PC-3 (cell line): ENCODE measurements at regions of chr5 and their contacts with region 1.

Region 1: DNA sequence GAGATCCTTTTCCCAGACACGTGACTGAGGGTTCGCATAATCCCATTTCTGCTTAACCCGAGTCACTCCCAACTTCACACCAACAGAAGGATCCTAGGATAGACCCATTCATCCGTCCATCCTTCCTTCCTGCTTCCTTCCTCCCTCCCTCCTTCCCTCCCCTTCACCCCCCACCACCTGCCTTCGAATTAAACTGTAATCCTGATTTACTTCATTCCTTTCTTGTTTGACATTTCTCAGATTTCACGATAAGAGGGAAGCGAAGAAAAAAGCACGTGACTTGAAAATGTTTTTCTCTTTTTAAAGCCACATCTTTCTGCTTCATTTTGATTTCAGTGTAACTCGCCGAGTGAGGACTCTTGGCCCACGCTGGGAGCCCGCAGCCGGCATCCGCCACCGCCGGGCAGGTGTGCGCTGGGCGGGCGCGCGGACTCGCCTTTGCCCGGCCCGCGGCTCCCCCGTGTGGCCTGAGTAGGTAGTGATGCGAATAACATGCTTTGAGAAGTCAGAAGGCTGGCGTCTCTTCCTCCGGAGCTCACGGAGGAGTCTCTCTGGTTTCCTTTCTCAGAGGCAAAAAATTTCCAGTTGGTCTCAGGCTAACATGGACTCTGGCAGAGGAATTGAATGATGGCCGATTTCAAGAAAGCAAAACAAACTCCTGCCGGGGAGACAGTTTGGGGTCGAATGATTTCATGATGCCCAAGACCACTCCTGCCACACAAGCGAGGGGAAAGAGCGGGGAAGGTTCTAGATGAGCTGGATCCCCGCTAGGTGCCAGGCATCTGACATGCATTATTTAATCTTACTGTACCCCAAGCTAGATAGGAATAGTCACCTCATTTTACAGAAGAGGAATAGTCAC is 117.7 kb downstream of the SLC12A2 start:
- DNase-seq: peak; percentile 87
- ATAC-seq: peak; percentile 66
- H3K4me3 ChIP-seq: peak overlapping the region; percentile 57
- H3K27ac ChIP-seq: peak overlapping the region; percentile 4; the same call in 1 of the 2 replicates
- H3K4me1 ChIP-seq: peaks cover 33% of the 10 kb centered on the region
- H3K27me3 ChIP-seq: no peaks in the 10 kb centered on the region
- CTCF ChIP-seq: peak; percentile 96

Region 2: GRCh38 chr5:127746756-127747155 is 454.5 kb before region 1 on chr5:
- CTCF ChIA-PET with region 1: no interaction called
- POLR2A ChIA-PET with region 1: no interaction called
- intact Hi-C with region 1: loop called (anchors 1 kb)
- DNase-seq: peak; percentile 69
- ATAC-seq: peak; percentile 92
- H3K4me3 ChIP-seq: no peak overlapping the region
- H3K27ac ChIP-seq: no peak overlapping the region
- H3K4me1 ChIP-seq: no peaks in the 10 kb centered on the region
- H3K27me3 ChIP-seq: peaks cover 20% of the 10 kb centered on the region
- CTCF ChIP-seq: peak; percentile 81

Region 3: DNA sequence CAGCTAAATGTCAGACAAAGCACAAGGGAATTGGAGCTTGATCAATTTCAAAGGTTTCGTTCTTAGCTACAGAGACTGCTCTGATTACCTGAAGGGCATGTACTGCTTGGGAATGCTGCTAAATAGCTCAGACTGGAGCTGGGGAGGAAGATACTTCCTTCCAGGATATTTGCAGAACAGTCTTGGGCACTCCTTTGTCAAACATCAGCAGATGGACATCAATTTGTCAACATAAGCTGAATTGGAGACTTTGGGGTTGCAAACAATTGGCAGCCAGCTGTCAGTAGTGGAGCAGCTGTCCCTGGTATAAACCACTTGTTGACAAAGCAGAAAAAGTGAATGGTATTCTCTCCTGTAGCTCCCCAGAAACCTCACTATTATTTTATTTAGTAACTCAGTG is 316.1 kb before region 1 on chr5:
- CTCF ChIA-PET with region 1: interaction called, 11 read pairs
- POLR2A ChIA-PET with region 1: no interaction called
- intact Hi-C with region 1: no loop called
- DNase-seq: peak; percentile 49
- ATAC-seq: peak; percentile 97
- H3K4me3 ChIP-seq: no peak overlapping the region
- H3K27ac ChIP-seq: no peak overlapping the region
- H3K4me1 ChIP-seq: 0 out of 2 replicates have a peak, but pooled peaks cover 6% of the 10 kb centered on the region
- H3K27me3 ChIP-seq: no peaks in the 10 kb centered on the region
- CTCF ChIP-seq: no peak

Region 4: GRCh38 chr5:127950720-127951391 is 250.4 kb before region 1 on chr5:
- CTCF ChIA-PET with region 1: no interaction called
- POLR2A ChIA-PET with region 1: no interaction called
- intact Hi-C with region 1: loop called (anchors 2 kb)
- DNase-seq: peak; percentile 79
- ATAC-seq: peak; percentile 100
- H3K4me3 ChIP-seq: no peak overlapping the region
- H3K27ac ChIP-seq: peak overlapping the region; percentile 41
- H3K4me1 ChIP-seq: peaks cover 14% of the 10 kb centered on the region
- H3K27me3 ChIP-seq: no peaks in the 10 kb centered on the region
- CTCF ChIP-seq: no peak

Region 5: GRCh38 chr5:128163991-128164390 is 37.3 kb before region 1 on chr5:
- CTCF ChIA-PET with region 1: no interaction called
- POLR2A ChIA-PET with region 1: no interaction called
- intact Hi-C with region 1: loop called (anchors 1 kb)
- DNase-seq: peak; percentile 89
- ATAC-seq: peak; percentile 98
- H3K4me3 ChIP-seq: no peak overlapping the region
- H3K27ac ChIP-seq: peak overlapping the region; percentile 55
- H3K4me1 ChIP-seq: peaks cover 14% of the 10 kb centered on the region
- H3K27me3 ChIP-seq: no peaks in the 10 kb centered on the region
- CTCF ChIP-seq: no peak